Activated CD4-positive, alpha-beta memory T cell treated with anti-CD3 and anti-CD28 coated beads for 36 hours (primary cell): ENCODE measurements at regions of chr1 and their contacts with region 1.

Region 1: DNA sequence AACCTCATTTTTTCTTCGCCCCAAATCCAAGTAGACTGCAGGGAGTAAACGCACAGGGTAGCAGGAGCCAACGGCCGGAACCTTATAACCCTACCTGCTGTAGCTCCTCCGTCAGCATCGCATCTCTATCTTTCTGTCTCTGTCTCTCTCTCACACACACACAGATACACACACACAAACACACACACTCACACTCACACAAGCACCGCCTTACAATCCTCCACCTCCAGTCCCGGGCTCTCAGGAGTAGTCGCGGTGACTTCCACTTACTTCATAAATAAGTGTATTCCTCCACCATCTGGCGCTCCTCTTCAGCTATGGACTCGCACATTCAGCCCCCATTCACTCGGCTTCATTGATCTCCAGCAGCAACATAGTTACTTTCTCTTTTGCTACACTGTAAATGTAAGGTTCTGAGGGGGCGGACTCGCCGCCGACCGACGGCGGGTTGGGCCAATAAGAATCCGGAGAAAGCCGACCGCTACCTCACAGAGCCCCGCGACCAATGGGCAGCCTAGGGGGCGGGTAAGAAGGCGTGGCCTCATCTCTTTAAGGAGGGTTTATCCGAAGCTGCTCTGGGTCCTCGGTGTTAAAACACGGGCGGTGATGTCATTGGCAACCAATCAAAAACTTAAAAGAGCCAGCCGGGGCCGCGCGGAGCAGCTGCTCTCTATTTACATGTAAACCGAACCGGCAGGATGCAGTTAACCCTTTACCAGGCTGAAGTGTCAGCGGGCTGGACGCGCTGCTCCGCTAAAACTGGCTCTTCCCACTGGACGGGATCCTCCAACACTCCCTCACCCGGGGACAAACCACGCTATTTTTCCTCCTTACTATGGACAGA is at the start of gene DUSP10:
- DNase-seq: peak; percentile 99
- H3K4me3 Mint-ChIP-seq: no peak within 1 kb of the TSS
- H3K27ac Mint-ChIP-seq: peak within 1 kb of the TSS; percentile 64
- H3K4me1 Mint-ChIP-seq: peaks cover 37% of the 10 kb centered on the region
- H3K27me3 Mint-ChIP-seq: no peaks in the 10 kb centered on the region
- total RNA-seq, gene DUSP10: 8.8 to 8.9 TPM

Region 2: DNA sequence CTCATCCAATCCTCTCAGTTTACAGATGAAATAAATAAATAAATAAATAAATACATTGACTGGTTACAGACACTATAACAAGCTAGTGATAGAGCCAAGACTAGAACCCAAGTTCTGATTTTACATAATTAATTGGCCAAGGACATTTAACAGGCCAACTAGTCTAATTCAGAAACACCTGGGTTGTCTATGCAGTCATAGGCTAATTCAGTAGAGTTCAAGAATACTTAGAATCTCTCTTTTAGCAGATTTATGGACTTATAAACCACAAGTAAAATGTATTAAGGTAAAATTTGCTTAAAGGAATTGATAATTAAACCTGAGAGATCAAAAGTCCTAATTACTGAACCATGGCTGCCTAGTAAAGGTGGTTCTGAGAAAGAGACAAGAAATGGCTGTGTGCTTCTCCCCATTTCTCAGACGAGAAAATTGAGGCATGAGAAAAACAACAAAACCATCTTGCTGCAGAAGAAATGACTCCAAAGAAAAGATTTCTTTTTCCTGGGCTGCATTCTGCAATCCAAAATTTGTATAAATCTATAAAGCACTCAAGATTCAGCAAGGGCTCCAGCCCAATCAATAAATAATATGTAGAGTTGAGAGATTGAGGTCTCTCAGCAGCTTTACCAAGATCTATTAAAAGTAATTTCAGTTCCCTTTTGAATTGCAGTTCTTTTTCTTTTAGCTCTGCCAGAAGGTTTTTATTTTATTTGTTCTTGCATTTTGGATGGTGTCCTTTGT is 98.4 kb before region 1 on chr1:
- CTCF ChIA-PET with region 1: no interaction called
- POLR2A ChIA-PET with region 1: no interaction called
- intact Hi-C with region 1: no loop called
- DNase-seq: no peak
- H3K4me3 Mint-ChIP-seq: no peak overlapping the region
- H3K27ac Mint-ChIP-seq: no peak overlapping the region
- H3K4me1 Mint-ChIP-seq: no peaks in the 10 kb centered on the region
- H3K27me3 Mint-ChIP-seq: no peaks in the 10 kb centered on the region

Region 3: GRCh38 chr1:221667504-221667903 is 74.4 kb before region 1 on chr1:
- CTCF ChIA-PET with region 1: no interaction called
- POLR2A ChIA-PET with region 1: no interaction called
- intact Hi-C with region 1: loop called (anchors 5 kb)
- DNase-seq: no peak
- H3K4me3 Mint-ChIP-seq: no peak overlapping the region
- H3K27ac Mint-ChIP-seq: no peak overlapping the region
- H3K4me1 Mint-ChIP-seq: peaks cover 7% of the 10 kb centered on the region
- H3K27me3 Mint-ChIP-seq: peaks cover 5% of the 10 kb centered on the region

Region 4: GRCh38 chr1:221777431-221778072 is 35.6 kb after region 1 on chr1:
- CTCF ChIA-PET with region 1: interaction called, 4 read pairs
- POLR2A ChIA-PET with region 1: interaction called, 11 read pairs
- intact Hi-C with region 1: loop called (anchors 1 kb)
- DNase-seq: peak; percentile 73
- H3K4me3 Mint-ChIP-seq: peak overlapping the region; percentile 38
- H3K27ac Mint-ChIP-seq: peak overlapping the region; percentile 79
- H3K4me1 Mint-ChIP-seq: peaks cover 71% of the 10 kb centered on the region
- H3K27me3 Mint-ChIP-seq: no peaks in the 10 kb centered on the region

Region 5: DNA sequence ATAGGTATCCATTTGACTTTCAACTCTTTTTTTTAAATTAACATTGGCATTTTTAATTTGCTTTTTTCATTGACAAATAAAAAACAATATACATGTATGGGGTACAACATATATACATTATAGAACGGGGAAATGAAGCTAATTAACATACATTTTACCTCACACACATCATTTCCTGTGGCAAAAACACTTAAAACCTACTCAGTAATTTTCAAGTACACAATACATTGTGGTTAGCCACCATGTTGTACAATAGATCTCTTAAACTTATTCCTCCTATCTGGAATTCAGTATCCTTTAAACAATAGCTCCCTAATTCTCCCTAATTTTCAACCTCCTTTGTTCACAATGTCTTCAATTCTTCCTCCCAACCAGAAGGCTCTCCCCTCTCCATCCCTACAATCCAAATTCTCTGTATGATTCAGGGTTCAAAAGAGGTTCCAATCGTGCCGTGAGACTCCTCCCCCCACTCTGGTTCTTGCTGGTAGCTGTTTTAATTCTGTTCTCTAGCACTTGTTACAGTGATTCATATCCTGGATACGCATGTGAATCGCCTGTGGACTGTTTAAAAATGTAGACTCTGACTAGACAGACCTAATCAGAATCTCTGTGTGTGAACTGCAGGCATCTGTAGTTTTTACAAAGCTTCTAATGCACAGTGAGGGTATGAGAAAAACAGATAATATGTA is 87.5 kb after region 1 on chr1:
- CTCF ChIA-PET with region 1: interaction called, 5 read pairs
- POLR2A ChIA-PET with region 1: interaction called, 9 read pairs
- intact Hi-C with region 1: loop called (anchors 1 kb)
- DNase-seq: peak; percentile 83
- H3K4me3 Mint-ChIP-seq: peak overlapping the region; percentile 30
- H3K27ac Mint-ChIP-seq: peak overlapping the region; percentile 90
- H3K4me1 Mint-ChIP-seq: peaks cover 53% of the 10 kb centered on the region
- H3K27me3 Mint-ChIP-seq: no peaks in the 10 kb centered on the region

Region 6: GRCh38 chr1:222009105-222009730 is 267.3 kb after region 1 on chr1:
- CTCF ChIA-PET with region 1: interaction called, 8 read pairs
- POLR2A ChIA-PET with region 1: no interaction called
- intact Hi-C with region 1: loop called (anchors 1 kb)
- DNase-seq: peak; percentile 27
- H3K4me3 Mint-ChIP-seq: no peak overlapping the region
- H3K27ac Mint-ChIP-seq: no peak overlapping the region
- H3K4me1 Mint-ChIP-seq: no peaks in the 10 kb centered on the region
- H3K27me3 Mint-ChIP-seq: no peaks in the 10 kb centered on the region